GM13976 (cell line): ENCODE measurements at regions of chr21 and their contacts with region 1.

Region 1: DNA sequence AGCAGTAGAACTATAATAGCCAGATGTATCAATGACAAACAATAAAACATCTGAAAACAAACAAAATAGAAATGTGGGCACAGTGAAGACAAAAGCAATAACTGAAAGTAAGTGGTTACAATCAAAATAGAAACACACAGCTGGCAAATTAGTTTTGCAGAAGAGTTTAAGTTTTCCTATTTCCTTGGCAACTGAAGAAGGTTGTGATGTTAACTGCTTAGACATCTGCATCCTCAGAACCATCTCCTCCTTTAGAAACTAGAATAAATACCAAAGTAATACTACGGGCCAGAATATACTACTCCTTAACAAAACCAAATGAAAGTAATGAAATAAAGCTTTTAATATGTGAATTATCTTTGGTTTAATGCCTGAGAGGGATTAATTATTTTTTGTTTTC is 605.5 kb downstream of the LTN1 start:
- DNase-seq: no peak
- CTCF ChIP-seq: no peak

Region 2: GRCh38 chr21:28325618-28326017 is 61.6 kb before region 1 on chr21:
- in situ Hi-C with region 1: loop called (anchors 10 kb)
- DNase-seq: no peak
- CTCF ChIP-seq: no peak